ENCODE measurements at regions of chr12 and their contacts with region 1.

Region 1: GRCh38 chr12:55829967-55830600 is 697 bp upstream of the DNAJC14 start:
- DNase-seq: peak in 8 of 10 donors; percentile 48 to 72 (median 59)
- H3K4me3 ChIP-seq: peak overlapping the region; percentile 68 to 99 (median 93)
- H3K27ac ChIP-seq: peak overlapping the region; percentile 82 to 100 (median 98)
- H3K27me3 ChIP-seq: no peaks in the 10 kb centered on the region
- CTCF ChIP-seq: peak in 2 of 56 donors; percentile 6 to 23

Region 2: DNA sequence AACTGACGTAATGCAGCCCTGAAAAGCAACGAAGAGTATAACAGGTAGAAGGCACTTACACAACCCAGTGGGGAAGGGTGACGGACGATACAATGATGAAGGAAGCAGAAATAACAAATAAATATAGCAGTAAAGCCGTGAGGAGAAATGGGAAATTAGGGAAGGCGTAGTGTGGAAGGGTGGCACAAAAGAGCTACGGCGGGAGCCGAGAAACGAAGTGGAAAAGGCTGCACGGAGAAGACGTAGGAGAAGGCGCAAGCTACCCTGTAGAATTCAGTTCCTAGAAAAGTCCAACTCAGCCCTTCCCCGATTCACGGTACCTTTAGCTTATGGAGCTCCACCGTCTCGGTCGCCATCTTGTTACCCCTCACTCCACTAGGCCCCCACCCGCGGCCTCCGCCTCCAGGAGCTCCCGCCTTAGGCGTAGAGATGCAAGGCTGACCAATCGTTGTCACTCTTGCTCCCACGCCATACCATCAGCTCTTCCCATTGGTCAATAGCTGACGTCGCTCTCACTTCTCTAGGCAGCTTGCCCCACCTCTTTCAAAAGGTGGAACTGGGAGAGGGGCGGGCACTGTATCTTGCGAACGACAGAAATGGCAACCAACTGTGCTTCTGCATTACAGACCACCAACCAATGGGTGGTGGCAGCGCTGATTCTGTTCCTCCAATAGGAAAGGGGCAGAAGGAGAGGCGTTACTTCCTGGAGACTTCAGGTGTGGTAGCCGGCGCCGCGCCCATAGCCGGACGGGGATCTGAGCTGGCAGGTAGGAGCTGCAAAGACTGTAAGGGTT is 12.5 kb before region 1 on chr12 and contains the starts of genes ORMDL2 and SARNP:
- intact Hi-C with region 1: loop called in 1 of 2 experiments (anchors 1 kb)
- DNase-seq: peak; percentile 92 to 100 (median 99)
- H3K4me3 ChIP-seq: peak within 1 kb of the TSS; percentile 56 to 100 (median 93)
- H3K27ac ChIP-seq: peak within 1 kb of the TSS in 58 of 59 donors; percentile 56 to 94 (median 87)
- H3K27me3 ChIP-seq: no peaks in the 10 kb centered on the region
- CTCF ChIP-seq: peak in 17 of 56 donors; percentile 4 to 37 (median 15)
- total RNA-seq, gene ORMDL2: 5.9 to 21.8 (median 11.6) TPM
- total RNA-seq, gene SARNP: 26.4 to 54.1 (median 39.1) TPM

Region 3: DNA sequence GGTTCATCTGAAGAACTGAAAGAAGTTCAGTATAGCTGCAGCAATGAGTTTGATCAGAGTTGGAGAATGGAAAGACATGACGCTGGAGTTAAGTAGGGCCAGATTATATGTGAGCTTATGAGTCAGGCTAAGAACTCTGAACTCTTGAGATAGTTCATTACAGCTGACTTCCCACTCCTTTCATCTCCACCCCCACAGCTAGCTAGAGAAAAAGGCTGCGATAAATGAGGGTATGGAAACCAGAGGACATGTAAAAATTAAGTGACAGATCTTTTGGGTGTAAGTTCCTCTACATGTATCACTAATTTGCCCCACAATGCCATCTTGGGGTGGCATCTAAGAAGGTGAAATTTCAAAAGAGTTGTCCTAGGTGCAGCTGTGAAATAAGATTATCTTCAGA is 69.0 kb after region 1 on chr12:
- intact Hi-C with region 1: no loop called
- DNase-seq: no peak
- H3K4me3 ChIP-seq: no peak overlapping the region
- H3K27ac ChIP-seq: no peak overlapping the region
- H3K27me3 ChIP-seq: no peaks in the 10 kb centered on the region
- CTCF ChIP-seq: no peak

Region 4: DNA sequence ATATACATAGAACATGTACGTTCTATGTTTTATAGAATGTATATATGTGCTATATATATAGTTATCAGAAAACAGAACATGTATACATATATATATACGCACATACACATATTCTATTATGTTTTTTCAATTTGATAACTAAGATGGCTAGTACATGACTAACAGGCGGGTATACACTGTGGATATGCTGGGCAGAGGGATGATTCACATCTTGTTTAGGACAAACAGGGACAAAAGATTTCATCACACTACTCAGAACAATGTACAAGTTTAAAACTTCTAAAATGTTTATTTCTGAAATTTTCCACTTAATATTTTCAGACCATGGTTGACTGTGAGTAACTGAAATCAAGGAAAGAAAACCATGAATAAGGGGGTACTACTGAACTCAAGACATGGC is 601.8 kb after region 1 on chr12:
- intact Hi-C with region 1: no loop called
- DNase-seq: no peak
- H3K4me3 ChIP-seq: no peak overlapping the region
- H3K27ac ChIP-seq: no peak overlapping the region
- H3K27me3 ChIP-seq: no peaks in the 10 kb centered on the region
- CTCF ChIP-seq: no peak

Measured in dorsolateral prefrontal cortex (tissue), 120 donors.